ENCODE measurements at regions of chr20 and their contacts with region 1.

Region 1: DNA sequence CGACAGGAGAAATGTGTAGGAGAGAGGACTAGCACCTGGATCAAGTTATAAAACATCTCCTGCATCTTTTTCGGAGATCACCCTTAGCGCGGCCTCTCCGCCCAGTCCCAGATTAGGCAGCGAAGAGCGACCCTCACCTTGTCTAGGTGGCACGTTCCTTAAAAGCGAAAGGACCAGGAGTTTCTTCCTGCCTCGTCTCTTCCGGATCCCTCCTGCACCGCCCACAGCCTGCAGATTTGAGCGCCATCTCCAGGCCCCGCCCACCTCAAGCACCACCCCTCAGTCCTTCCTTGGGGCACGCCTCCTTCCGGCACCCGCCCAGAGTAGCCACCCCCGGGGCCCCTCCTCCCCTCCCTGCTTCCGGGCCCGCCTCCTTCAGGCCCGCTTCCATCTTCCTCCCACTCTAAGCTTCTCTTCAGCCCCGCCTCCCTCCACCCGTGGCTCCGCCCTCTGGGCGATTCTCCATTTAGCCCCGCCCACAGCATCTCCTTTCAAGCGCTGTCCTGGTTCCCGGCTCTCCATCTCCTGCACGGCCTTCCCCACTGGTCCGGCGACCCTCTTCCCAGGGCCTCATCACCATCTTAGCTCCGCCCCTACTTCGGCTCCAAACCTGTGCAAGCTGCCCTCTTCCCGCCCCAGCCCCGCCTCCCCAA is 662 bp upstream of the RALY start:
- DNase-seq: peak; percentile 99 to 100
- ATAC-seq: peak; percentile 91 to 94 (median 92)
- H3K4me3 ChIP-seq: peak overlapping the region; percentile 80
- H3K27ac ChIP-seq: peak overlapping the region; percentile 96
- H3K4me1 ChIP-seq: peaks cover 39% of the 10 kb centered on the region
- H3K27me3 ChIP-seq: no peaks in the 10 kb centered on the region
- CTCF ChIP-seq: no peak

Region 2: GRCh38 chr20:34010405-34010931 is 17.4 kb after region 1 on chr20:
- intact Hi-C with region 1: no loop called
- DNase-seq: no peak
- ATAC-seq: no peak
- H3K4me3 ChIP-seq: no peak overlapping the region
- H3K27ac ChIP-seq: no peak overlapping the region
- H3K4me1 ChIP-seq: peaks cover 69% of the 10 kb centered on the region
- H3K27me3 ChIP-seq: no peaks in the 10 kb centered on the region
- CTCF ChIP-seq: no peak

Region 3: DNA sequence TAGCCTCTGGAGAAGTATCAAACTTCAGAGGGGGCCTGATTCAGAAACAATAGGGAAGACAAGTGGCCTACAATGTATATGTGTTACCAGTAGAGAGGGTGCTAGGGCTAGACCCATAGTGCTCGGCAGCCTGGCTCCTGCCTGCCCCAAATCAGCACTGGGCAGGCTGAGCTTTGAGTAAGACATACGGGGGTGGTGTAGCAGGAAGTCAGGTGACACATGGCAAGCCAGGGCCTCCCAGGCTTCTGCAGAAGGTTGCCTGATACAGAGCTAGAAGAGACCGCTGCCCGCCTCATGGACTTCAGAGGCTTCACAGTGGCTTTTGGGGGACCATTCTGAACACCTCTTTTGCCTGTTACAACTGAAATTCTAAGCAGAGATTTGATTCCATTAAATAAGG is 44.1 kb after region 1 on chr20:
- intact Hi-C with region 1: loop called (anchors 2 to 5 kb)
- DNase-seq: no peak
- ATAC-seq: peak in 2 of 4 donors; percentile 42 to 51
- H3K4me3 ChIP-seq: no peak overlapping the region
- H3K27ac ChIP-seq: peak overlapping the region; percentile 44
- H3K4me1 ChIP-seq: peaks cover 63% of the 10 kb centered on the region
- H3K27me3 ChIP-seq: no peaks in the 10 kb centered on the region
- CTCF ChIP-seq: no peak

Region 4: DNA sequence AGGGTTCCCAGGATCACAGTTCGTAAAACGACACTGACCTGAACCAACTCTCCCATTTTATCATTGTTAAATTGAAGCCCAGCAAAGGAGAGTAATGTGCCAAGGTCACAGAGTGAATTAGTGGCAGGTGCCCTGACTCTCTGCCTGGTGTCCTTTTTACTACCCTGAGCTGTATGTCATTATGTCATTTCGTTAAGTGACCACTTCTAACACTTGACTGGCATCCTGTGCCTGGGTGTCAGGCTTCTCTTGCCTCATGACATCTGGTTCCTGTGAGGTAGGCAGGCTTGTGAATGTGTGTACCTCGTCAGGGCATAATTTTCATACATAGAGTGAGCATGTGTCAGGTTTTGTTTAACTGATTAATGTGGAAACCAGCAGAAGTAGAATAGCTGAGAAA is 49.2 kb after region 1 on chr20:
- intact Hi-C with region 1: loop called (anchors 2 to 5 kb)
- DNase-seq: no peak
- ATAC-seq: peak; percentile 70 to 85 (median 80)
- H3K4me3 ChIP-seq: no peak overlapping the region
- H3K27ac ChIP-seq: peak overlapping the region; percentile 86
- H3K4me1 ChIP-seq: peaks cover 83% of the 10 kb centered on the region
- H3K27me3 ChIP-seq: no peaks in the 10 kb centered on the region
- CTCF ChIP-seq: no peak